HepG2 (cell line): ENCODE measurements at regions of chr15 and their contacts with region 1.

Region 1: GRCh38 chr15:74635228-74635627 is 19.6 kb downstream of the CLK3 start:
- DNase-seq: peak; percentile 60
- ATAC-seq: peak; percentile 48
- H3K4me3 ChIP-seq: no peak overlapping the region
- H3K27ac ChIP-seq: no peak overlapping the region
- H3K4me1 ChIP-seq: peaks cover 20% of the 10 kb centered on the region
- H3K27me3 ChIP-seq: no peaks in the 10 kb centered on the region
- CTCF ChIP-seq: peak; percentile 95
- EP300 ChIP-seq: no peak
- POLR2A ChIP-seq: no peak
- RAD21 ChIP-seq: peak; percentile 88

Region 2: GRCh38 chr15:74620636-74621545 is 14.3 kb before region 1 on chr15:
- CTCF ChIA-PET with region 1: interaction called, 19 read pairs
- POLR2A ChIA-PET with region 1: interaction called, 4 read pairs
- in situ Hi-C with region 1: no loop called
- intact Hi-C with region 1: no loop called
- DNase-seq: peak; percentile 79
- ATAC-seq: peak; percentile 79
- H3K4me3 ChIP-seq: no peak overlapping the region
- H3K27ac ChIP-seq: no peak overlapping the region
- H3K4me1 ChIP-seq: peaks cover 28% of the 10 kb centered on the region
- H3K27me3 ChIP-seq: no peaks in the 10 kb centered on the region; a peak in 1 of 5 replicates
- CTCF ChIP-seq: peak; percentile 92
- EP300 ChIP-seq: no peak
- POLR2A ChIP-seq: no peak
- RAD21 ChIP-seq: peak; percentile 87

Region 3: DNA sequence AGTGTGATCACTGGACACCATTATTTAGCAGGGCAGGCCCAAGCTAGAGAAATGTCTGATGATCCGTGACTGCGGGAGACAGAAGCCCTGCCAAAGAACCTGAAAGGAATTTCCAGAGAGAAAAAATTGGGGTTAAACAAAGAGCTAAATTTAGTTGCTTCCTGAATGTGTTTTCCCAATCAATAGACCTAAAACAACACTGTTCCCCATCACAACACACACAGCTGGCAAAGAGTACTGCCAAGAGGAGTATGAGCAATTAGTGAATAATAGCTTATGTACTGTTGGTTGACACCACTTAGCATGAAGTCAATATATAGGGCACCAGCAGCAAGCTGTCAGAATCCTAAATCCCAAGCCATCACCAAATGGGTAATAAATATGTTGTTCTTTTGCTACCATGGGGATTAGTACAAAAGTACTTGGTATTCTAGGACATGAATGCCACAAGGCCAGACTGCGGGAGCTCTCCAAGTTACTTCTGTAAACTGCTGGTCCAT is 16.1 kb after region 1 on chr15:
- CTCF ChIA-PET with region 1: no interaction called
- POLR2A ChIA-PET with region 1: no interaction called
- in situ Hi-C with region 1: no loop called
- intact Hi-C with region 1: no loop called
- DNase-seq: no peak
- ATAC-seq: no peak
- H3K4me3 ChIP-seq: no peak overlapping the region
- H3K27ac ChIP-seq: no peak overlapping the region
- H3K4me1 ChIP-seq: peaks cover 7% of the 10 kb centered on the region; the same call in 1 of the 2 replicates
- H3K27me3 ChIP-seq: no peaks in the 10 kb centered on the region
- CTCF ChIP-seq: no peak
- EP300 ChIP-seq: no peak
- POLR2A ChIP-seq: no peak
- RAD21 ChIP-seq: no peak

Region 4: DNA sequence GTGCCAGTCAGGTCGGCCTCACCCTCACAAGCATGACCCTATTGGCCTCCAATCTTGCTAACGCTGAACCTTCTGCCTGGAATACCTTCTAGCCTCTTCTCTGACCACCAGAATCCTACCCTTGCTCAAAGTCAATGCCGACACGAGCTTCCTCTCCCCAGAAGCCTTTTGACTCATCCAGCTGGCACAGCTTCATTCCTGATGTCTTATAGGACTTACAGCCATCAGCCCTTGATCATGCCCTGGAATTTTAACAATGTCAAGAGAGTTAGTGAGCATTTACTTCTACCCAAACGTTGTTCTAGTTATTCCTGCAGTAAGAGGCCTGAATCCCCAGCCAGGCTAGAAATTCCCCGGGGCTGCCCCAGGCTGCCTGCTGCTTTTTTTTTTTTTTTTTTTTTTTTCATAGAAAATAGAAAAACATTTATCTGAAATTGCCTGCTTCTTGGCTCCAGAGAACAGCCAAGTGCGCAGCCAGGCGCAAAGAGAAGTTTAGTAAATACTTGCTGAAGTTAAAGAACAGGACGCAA is 117.3 kb after region 1 on chr15:
- CTCF ChIA-PET with region 1: no interaction called
- POLR2A ChIA-PET with region 1: no interaction called
- in situ Hi-C with region 1: no loop called
- intact Hi-C with region 1: no loop called
- DNase-seq: no peak
- ATAC-seq: no peak
- H3K4me3 ChIP-seq: no peak overlapping the region
- H3K27ac ChIP-seq: no peak overlapping the region
- H3K4me1 ChIP-seq: peaks cover 27% of the 10 kb centered on the region
- H3K27me3 ChIP-seq: no peaks in the 10 kb centered on the region; a peak in 1 of 5 replicates
- CTCF ChIP-seq: no peak
- EP300 ChIP-seq: no peak
- POLR2A ChIP-seq: no peak
- RAD21 ChIP-seq: no peak

Region 5: DNA sequence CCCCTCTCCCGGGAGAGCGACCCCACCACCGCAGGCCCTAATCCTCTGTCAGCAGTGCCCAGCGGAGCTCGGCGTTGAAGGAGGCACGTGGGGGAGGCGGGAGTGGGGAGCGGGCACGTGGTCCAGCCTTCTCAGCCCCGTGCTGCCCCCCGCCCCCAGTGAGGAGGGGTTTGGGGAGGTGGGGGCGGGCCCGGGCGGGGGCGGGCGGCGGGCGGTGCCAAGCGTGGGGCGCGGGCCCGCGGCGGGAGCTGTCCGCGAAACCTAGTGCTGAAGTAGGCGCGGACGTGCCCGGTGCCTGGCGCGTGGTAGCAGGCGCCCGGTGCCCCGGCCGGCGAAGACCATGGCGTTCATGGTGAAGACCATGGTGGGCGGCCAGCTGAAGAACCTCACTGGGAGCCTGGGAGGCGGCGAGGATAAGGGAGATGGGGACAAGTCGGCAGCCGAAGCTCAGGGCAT is 191.2 kb after region 1 on chr15 and contains the start of gene CPLX3:
- CTCF ChIA-PET with region 1: no interaction called
- POLR2A ChIA-PET with region 1: no interaction called
- in situ Hi-C with region 1: no loop called
- intact Hi-C with region 1: no loop called
- DNase-seq: no peak
- ATAC-seq: peak; percentile 36; the same call in 2 of the 3 replicates
- H3K4me3 ChIP-seq: peak within 1 kb of the TSS in 1 of 3 experiments; percentile 16; a peak in 1 of 6 replicates
- H3K27ac ChIP-seq: no peak within 1 kb of the TSS
- H3K4me1 ChIP-seq: peaks cover 2% of the 10 kb centered on the region
- H3K27me3 ChIP-seq: peaks cover 5 to 62% of the 10 kb centered on the region in 2 experiments; a peak in 4 of 5 replicates
- CTCF ChIP-seq: no peak
- EP300 ChIP-seq: no peak
- POLR2A ChIP-seq: no peak
- RAD21 ChIP-seq: no peak
- total RNA-seq, gene CPLX3: not detected in 2 replicates

Region 6: GRCh38 chr15:74906446-74907162 is 271.4 kb after region 1 on chr15 and contains the start of gene FAM219B:
- CTCF ChIA-PET with region 1: no interaction called
- POLR2A ChIA-PET with region 1: no interaction called
- in situ Hi-C with region 1: no loop called
- intact Hi-C with region 1: no loop called
- DNase-seq: peak; percentile 78
- ATAC-seq: peak; percentile 93
- H3K4me3 ChIP-seq: peak within 1 kb of the TSS; percentile 85 to 91 (median 88)
- H3K27ac ChIP-seq: peak within 1 kb of the TSS; percentile 76
- H3K4me1 ChIP-seq: peaks cover 31% of the 10 kb centered on the region
- H3K27me3 ChIP-seq: no peaks in the 10 kb centered on the region; a peak in 1 of 5 replicates
- CTCF ChIP-seq: peak; percentile 8; the same call in 1 of the 2 replicates
- EP300 ChIP-seq: no peak
- POLR2A ChIP-seq: peak; percentile 43 to 85; a peak in 3 of 4 replicates
- RAD21 ChIP-seq: no peak; the same call in 1 of the 2 replicates
- total RNA-seq, gene FAM219B: 18.0 and 36.6 TPM in 2 replicates

Region 7: GRCh38 chr15:74956648-74957300 is 321.5 kb after region 1 on chr15 and contains the start of gene RPP25:
- CTCF ChIA-PET with region 1: no interaction called
- POLR2A ChIA-PET with region 1: no interaction called
- in situ Hi-C with region 1: loop called (anchors 10 kb)
- intact Hi-C with region 1: no loop called
- DNase-seq: peak; percentile 27
- ATAC-seq: peak; percentile 84
- H3K4me3 ChIP-seq: peak within 1 kb of the TSS; percentile 60 to 78 (median 63)
- H3K27ac ChIP-seq: no peak within 1 kb of the TSS
- H3K4me1 ChIP-seq: peaks cover 18% of the 10 kb centered on the region
- H3K27me3 ChIP-seq: peaks cover 5 to 56% of the 10 kb centered on the region in 2 experiments; a peak in 4 of 5 replicates
- CTCF ChIP-seq: no peak
- EP300 ChIP-seq: no peak
- POLR2A ChIP-seq: no peak; a peak in 1 of 4 replicates
- RAD21 ChIP-seq: no peak
- total RNA-seq, gene RPP25: 0.08 and 0.11 TPM in 2 replicates